ENCODE measurements at regions of chr12 and their contacts with region 1.

Region 1: DNA sequence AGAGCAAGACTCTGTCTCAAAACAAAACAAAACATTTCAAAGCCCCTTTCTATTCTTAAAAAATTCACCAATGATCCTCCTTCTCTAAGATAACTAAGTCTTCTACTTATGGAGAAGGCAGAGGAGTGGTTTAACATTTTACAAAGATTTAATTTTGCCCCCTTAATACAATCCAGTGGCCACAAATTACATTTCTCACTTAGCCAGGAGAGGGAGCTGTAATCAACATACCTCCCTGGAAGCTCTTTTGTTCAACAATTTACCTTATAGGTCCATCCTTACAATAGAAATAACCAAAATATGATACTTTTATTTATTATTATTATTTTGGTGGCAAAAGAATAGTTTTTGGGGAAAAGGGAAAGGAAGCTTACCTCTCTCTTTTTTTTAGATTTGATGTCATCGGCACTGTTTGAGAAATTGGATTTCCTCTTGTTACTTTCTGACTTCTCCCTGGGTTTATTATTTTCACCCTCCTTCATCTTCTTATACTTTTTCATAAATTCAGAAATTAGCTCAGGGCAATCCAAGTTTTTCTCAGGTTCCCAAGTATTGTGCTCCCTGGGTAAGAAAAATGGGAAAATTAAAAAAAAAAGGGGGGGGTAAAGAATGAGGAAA is 28.1 kb downstream of the CBX5 start:
- DNase-seq: peak; percentile 51 to 69
- ATAC-seq: peak; percentile 73 to 86
- H3K4me3 ChIP-seq: no peak overlapping the region
- H3K27ac ChIP-seq: no peak overlapping the region
- H3K4me1 ChIP-seq: no peaks in the 10 kb centered on the region
- CTCF ChIP-seq: peak; percentile 80
- EP300 ChIP-seq: no peak
- POLR2A ChIP-seq: no peak
- RAD21 ChIP-seq: peak; percentile 64 to 65

Region 2: DNA sequence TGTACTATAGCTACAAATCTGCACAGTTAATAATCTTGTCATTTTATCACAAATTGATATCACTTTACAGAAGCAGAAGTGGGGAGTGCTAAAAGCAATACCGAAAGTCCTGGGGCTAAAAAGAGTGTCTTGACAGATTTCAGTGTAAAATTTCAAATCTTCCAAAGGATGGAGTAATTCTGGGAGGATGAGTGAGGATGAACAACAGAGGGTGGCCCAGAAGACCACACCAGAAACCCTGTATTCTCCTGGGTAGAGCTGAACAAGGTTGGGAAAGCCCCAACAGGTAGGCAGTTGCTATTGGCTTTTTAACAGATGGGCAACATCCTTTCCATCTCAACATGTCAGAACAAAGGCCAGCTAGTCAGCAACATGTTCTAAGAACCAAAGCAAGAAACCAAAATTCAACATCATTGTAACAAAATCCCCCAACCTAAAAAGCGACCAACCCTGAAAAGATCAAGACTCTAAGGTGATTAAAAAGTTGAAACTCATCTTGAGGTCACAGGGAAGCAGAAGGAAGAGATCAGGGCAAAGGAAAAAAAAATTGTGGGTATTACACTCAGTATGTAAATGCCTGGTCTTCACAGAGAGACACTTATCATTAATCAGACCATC is 10.7 kb before region 1 on chr12:
- CTCF ChIA-PET with region 1: interaction called, 54 read pairs
- POLR2A ChIA-PET with region 1: interaction called, 4 read pairs
- DNase-seq: no peak
- ATAC-seq: no peak
- H3K4me3 ChIP-seq: no peak overlapping the region
- H3K27ac ChIP-seq: no peak overlapping the region
- H3K4me1 ChIP-seq: no peaks in the 10 kb centered on the region
- CTCF ChIP-seq: no peak
- EP300 ChIP-seq: no peak
- POLR2A ChIP-seq: no peak
- RAD21 ChIP-seq: no peak

Region 3: DNA sequence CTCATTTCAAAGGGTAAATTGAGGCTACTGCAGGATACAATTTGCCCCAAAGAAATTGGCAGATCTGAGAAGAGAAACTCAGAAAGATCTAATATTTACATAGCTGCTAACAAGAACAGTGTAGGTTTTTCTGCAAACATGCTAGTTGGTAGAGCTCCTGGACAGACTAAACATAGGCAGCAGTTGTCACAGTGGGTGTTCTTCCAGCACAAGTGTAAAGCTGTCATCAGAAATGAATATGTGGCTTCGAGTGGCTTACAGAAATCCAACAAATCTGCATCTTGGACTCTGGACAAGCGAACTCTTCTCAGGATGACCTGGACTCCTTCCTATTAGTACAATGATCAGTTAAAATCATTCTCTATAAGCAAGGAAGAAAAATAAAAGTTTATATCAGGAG is 22.2 kb after region 1 on chr12:
- CTCF ChIA-PET with region 1: interaction called, 16 read pairs
- POLR2A ChIA-PET with region 1: interaction called, 23 read pairs
- DNase-seq: no peak
- ATAC-seq: no peak
- H3K4me3 ChIP-seq: no peak overlapping the region
- H3K27ac ChIP-seq: no peak overlapping the region
- H3K4me1 ChIP-seq: peaks cover 11% of the 10 kb centered on the region
- CTCF ChIP-seq: no peak
- EP300 ChIP-seq: no peak
- POLR2A ChIP-seq: no peak
- RAD21 ChIP-seq: no peak

Region 4: DNA sequence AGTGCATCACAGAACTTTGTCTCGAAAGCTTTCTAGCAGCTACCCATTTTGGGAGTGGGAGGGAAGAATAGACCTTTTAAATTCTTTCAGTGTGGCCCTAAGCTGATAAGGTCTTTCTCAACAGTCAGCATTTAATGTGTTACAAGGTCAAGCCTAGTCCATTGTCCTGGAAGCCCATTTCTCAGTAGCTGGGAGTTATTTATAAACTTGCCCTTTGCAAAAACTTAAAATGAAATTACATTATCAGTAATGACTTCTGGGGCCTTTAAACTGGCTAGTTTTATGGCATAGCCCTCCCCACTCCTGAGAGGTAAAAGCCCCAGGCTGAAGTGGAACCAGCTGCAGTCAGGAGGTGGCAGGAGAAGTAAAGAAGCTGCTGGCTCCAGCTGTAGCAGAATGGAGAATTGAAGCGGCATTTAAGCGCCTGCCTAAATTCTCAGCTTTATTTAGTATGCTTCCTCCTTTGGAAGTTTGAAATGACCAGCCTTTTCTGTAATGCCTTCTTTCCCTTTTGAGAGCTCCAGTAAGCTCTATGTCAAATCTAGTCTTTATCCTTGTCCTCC is 85.6 kb after region 1 on chr12:
- CTCF ChIA-PET with region 1: interaction called, 13 read pairs
- POLR2A ChIA-PET with region 1: no interaction called
- DNase-seq: no peak
- ATAC-seq: no peak
- H3K4me3 ChIP-seq: no peak overlapping the region
- H3K27ac ChIP-seq: no peak overlapping the region
- H3K4me1 ChIP-seq: 0 out of 3 replicates have a peak, but pooled peaks cover 2% of the 10 kb centered on the region
- CTCF ChIP-seq: no peak
- EP300 ChIP-seq: no peak
- POLR2A ChIP-seq: no peak
- RAD21 ChIP-seq: no peak

Measured in A549 (cell line).